ENCODE measurements at regions of chr15 and their contacts with region 1.

Region 1: DNA sequence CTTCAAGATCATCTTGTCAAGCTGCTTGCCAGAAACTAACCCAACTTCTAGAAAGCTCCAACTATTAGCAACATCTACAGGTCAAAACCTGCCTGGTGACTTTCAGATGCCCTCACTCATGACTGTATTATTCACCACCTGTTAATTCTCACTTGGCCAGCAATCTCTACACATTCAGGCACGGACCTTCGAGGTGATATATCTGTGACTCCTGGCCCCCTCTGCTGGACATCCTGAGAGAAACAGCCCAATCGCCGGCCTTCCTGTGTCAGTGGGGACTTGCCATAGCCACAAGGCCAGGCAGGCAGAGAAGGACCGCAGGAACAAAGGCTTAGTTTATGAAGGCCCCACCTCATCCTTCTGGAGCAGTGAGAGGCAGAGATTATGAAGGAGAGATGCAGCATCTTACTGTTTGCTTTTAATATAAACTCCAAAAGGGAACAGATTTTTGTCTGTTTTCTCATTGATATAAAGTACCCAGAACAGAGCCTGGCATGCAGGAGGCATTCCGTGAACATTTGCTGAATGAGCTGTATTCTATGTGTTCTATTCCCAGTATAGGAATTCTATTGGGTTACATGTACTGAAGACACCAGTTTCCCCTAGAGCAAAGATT is 24.4 kb upstream of the OCA2 start:
- DNase-seq: peak; percentile 73
- ATAC-seq: peak; percentile 65
- H3K4me3 Mint-ChIP-seq: no peak overlapping the region
- H3K27ac Mint-ChIP-seq: no peak overlapping the region
- H3K4me1 Mint-ChIP-seq: peaks cover 3% of the 10 kb centered on the region
- H3K27me3 Mint-ChIP-seq: no peaks in the 10 kb centered on the region

Region 2: DNA sequence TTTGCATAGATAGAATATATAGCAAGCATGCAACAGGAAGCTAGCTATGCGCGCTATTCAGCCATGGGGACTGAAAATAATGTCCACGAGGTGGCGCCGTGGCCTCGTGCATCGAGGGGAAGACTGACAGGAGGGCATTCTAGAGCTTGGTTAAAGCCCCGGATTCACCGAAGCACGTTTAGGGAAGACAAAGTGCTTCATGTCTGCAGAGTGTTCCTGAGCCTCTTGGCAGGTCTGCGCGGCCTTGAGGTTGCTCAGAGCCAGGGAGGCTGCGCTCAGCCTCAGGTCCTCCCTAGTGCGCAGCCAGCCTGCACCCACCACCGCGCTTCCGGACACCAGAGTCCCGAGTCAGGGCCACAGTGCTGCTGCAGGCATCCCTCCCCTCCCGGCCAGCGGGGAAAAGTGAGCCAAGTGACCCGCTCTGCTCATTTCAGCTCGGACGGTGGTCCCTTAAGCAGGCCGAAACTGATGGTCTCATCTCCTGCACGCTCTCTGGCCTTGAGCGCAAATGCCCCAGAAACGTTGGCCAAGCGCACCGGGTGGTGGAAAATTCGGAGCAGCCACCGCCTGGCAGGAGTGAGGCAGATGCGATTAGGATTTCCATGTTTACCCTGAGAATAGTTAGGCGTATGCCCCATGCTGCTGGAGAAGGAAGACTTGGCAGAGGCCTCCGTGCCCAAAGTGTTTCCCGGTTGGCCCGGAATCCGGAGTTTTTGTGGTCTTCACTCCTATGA is 1231.9 kb before region 1 on chr15:
- CTCF ChIA-PET with region 1: no interaction called
- POLR2A ChIA-PET with region 1: no interaction called
- intact Hi-C with region 1: loop called (anchors 1 to 10 kb)
- DNase-seq: peak; percentile 79
- ATAC-seq: peak; percentile 55
- H3K4me3 Mint-ChIP-seq: no peak overlapping the region
- H3K27ac Mint-ChIP-seq: no peak overlapping the region
- H3K4me1 Mint-ChIP-seq: no peaks in the 10 kb centered on the region
- H3K27me3 Mint-ChIP-seq: peaks cover 14% of the 10 kb centered on the region

Region 3: GRCh38 chr15:27665002-27665401 is 458.5 kb before region 1 on chr15:
- CTCF ChIA-PET with region 1: no interaction called
- POLR2A ChIA-PET with region 1: interaction called, 11 read pairs
- intact Hi-C with region 1: no loop called
- DNase-seq: peak; percentile 7
- ATAC-seq: no peak
- H3K4me3 Mint-ChIP-seq: no peak overlapping the region
- H3K27ac Mint-ChIP-seq: no peak overlapping the region
- H3K4me1 Mint-ChIP-seq: peaks cover 1% of the 10 kb centered on the region
- H3K27me3 Mint-ChIP-seq: peaks cover 2% of the 10 kb centered on the region

Region 4: GRCh38 chr15:28086175-28086703 is 37.3 kb before region 1 on chr15:
- CTCF ChIA-PET with region 1: interaction called, 4 read pairs
- POLR2A ChIA-PET with region 1: no interaction called
- intact Hi-C with region 1: loop called (anchors 1 to 2 kb)
- DNase-seq: peak; percentile 70
- ATAC-seq: peak; percentile 98
- H3K4me3 Mint-ChIP-seq: no peak overlapping the region
- H3K27ac Mint-ChIP-seq: no peak overlapping the region
- H3K4me1 Mint-ChIP-seq: peaks cover 4% of the 10 kb centered on the region
- H3K27me3 Mint-ChIP-seq: peaks cover 44% of the 10 kb centered on the region

Region 5: GRCh38 chr15:28191832-28192231 is 68.3 kb after region 1 on chr15:
- CTCF ChIA-PET with region 1: interaction called, 3 read pairs
- POLR2A ChIA-PET with region 1: no interaction called
- intact Hi-C with region 1: loop called in 1 of 2 experiments (anchors 10 kb)
- DNase-seq: no peak
- ATAC-seq: no peak
- H3K4me3 Mint-ChIP-seq: no peak overlapping the region
- H3K27ac Mint-ChIP-seq: no peak overlapping the region
- H3K4me1 Mint-ChIP-seq: no peaks in the 10 kb centered on the region
- H3K27me3 Mint-ChIP-seq: no peaks in the 10 kb centered on the region

Measured in activated CD4-positive, alpha-beta T cell treated with anti-CD3 and anti-CD28 coated beads for 36 hours (primary cell).